ENCODE measurements at regions of chr10 and their contacts with region 1.

Region 1: GRCh38 chr10:87659571-87660483 is at the start of gene PAPSS2:
- DNase-seq: peak; percentile 51 to 75 (median 72)
- H3K4me3 ChIP-seq: peak within 1 kb of the TSS; percentile 84
- H3K27ac ChIP-seq: peak within 1 kb of the TSS; percentile 54 to 87
- H3K4me1 ChIP-seq: peaks cover 9% of the 10 kb centered on the region
- H3K27me3 ChIP-seq: no peaks in the 10 kb centered on the region
- CTCF ChIP-seq: no peak
- EP300 ChIP-seq: no peak
- POLR2A ChIP-seq: no peak
- total RNA-seq, gene PAPSS2: 18.0 to 59.5 (median 42.5) TPM

Region 2: GRCh38 chr10:87531908-87532622 is 127.8 kb before region 1 on chr10:
- intact Hi-C with region 1: loop called in 1 of 4 experiments (anchors 5 kb)
- DNase-seq: peak in 2 of 5 donors; percentile 29 to 47
- H3K4me3 ChIP-seq: no peak overlapping the region
- H3K27ac ChIP-seq: peak overlapping the region in 1 of 2 donors; percentile 51
- H3K4me1 ChIP-seq: no peaks in the 10 kb centered on the region
- H3K27me3 ChIP-seq: no peaks in the 10 kb centered on the region
- CTCF ChIP-seq: no peak
- EP300 ChIP-seq: no peak
- POLR2A ChIP-seq: no peak

Region 3: GRCh38 chr10:87696922-87697714 is 37.3 kb after region 1 on chr10:
- intact Hi-C with region 1: loop called in 1 of 4 experiments (anchors 5 kb)
- DNase-seq: no peak
- H3K4me3 ChIP-seq: no peak overlapping the region
- H3K27ac ChIP-seq: no peak overlapping the region
- H3K4me1 ChIP-seq: peaks cover 8% of the 10 kb centered on the region
- H3K27me3 ChIP-seq: no peaks in the 10 kb centered on the region
- CTCF ChIP-seq: no peak
- EP300 ChIP-seq: no peak
- POLR2A ChIP-seq: no peak

Region 4: GRCh38 chr10:87734987-87735827 is 75.4 kb after region 1 on chr10:
- intact Hi-C with region 1: loop called in 3 of 4 experiments (anchors 2 to 5 kb)
- DNase-seq: peak; percentile 40 to 57 (median 52)
- H3K4me3 ChIP-seq: no peak overlapping the region
- H3K27ac ChIP-seq: peak overlapping the region; percentile 16 to 18
- H3K4me1 ChIP-seq: peaks cover 3% of the 10 kb centered on the region
- H3K27me3 ChIP-seq: no peaks in the 10 kb centered on the region
- CTCF ChIP-seq: peak; percentile 48 to 86 (median 86)
- EP300 ChIP-seq: no peak
- POLR2A ChIP-seq: no peak

Region 5: DNA sequence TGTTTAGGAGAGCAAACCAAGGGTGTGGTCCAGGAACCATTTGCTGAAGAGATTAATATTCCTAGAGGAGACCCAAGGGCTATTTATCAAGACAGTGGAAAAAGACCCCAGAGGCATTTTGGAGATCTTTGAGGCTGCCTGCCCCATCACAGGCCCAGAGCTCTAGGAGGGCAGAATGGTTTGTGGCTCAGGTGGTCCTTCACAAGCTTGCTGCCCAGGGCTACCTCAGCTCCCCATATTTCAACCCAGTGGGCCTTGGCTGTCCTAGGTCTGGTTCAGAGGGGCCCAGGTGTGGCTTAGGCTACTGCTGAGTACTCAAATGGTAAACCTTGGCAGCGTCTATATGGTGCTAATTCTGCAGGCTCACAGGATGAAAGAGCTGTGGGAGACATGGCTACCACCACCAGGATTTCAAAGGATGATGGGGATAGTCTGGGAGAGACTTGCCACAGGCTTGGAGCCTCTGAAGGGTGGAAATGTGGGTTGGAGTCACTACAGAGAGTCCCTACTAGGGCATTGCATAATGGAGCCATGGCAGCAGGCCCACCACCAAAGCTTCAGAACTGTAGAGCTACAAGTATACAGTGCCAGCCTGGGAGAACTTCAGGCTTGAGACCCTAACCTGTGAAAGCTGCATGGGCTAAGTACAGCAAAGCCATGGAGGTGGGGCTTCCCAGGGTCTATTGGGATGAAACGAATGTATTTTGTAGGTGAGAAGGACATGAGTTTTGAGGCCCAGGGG is 227.9 kb after region 1 on chr10:
- intact Hi-C with region 1: no loop called
- DNase-seq: no peak
- H3K4me3 ChIP-seq: no peak overlapping the region
- H3K27ac ChIP-seq: no peak overlapping the region
- H3K4me1 ChIP-seq: peaks cover 2% of the 10 kb centered on the region
- H3K27me3 ChIP-seq: no peaks in the 10 kb centered on the region
- CTCF ChIP-seq: no peak
- EP300 ChIP-seq: no peak
- POLR2A ChIP-seq: no peak

Measured in ovary (tissue), 10 donors.